Activated CD4-positive, alpha-beta T cell treated with anti-CD3 and anti-CD28 coated beads, Interleukin-2, amount 10 ng/mL, durations not matched to agents 24 days and 14 days (primary cell): ENCODE measurements at regions of chr17 and their contacts with region 1.

Region 1: GRCh38 chr17:9291912-9292560 is 270.7 kb downstream of the NTN1 start:
- DNase-seq: peak; percentile 74
- H3K4me3 Mint-ChIP-seq: no peak overlapping the region
- H3K27ac Mint-ChIP-seq: no peak overlapping the region
- H3K4me1 Mint-ChIP-seq: peaks cover 22% of the 10 kb centered on the region
- H3K27me3 Mint-ChIP-seq: no peaks in the 10 kb centered on the region

Region 2: GRCh38 chr17:9021158-9021991 is 270.7 kb before region 1 on chr17 and contains the start of gene NTN1:
- intact Hi-C with region 1: loop called (anchors 5 kb)
- DNase-seq: peak; percentile 91
- H3K4me3 Mint-ChIP-seq: peak within 1 kb of the TSS; percentile 77
- H3K27ac Mint-ChIP-seq: peak within 1 kb of the TSS; percentile 31
- H3K4me1 Mint-ChIP-seq: peaks cover 4% of the 10 kb centered on the region
- H3K27me3 Mint-ChIP-seq: peaks cover 51% of the 10 kb centered on the region
- total RNA-seq, gene NTN1: 0.43 and 0.51 TPM in 2 replicates

Region 3: DNA sequence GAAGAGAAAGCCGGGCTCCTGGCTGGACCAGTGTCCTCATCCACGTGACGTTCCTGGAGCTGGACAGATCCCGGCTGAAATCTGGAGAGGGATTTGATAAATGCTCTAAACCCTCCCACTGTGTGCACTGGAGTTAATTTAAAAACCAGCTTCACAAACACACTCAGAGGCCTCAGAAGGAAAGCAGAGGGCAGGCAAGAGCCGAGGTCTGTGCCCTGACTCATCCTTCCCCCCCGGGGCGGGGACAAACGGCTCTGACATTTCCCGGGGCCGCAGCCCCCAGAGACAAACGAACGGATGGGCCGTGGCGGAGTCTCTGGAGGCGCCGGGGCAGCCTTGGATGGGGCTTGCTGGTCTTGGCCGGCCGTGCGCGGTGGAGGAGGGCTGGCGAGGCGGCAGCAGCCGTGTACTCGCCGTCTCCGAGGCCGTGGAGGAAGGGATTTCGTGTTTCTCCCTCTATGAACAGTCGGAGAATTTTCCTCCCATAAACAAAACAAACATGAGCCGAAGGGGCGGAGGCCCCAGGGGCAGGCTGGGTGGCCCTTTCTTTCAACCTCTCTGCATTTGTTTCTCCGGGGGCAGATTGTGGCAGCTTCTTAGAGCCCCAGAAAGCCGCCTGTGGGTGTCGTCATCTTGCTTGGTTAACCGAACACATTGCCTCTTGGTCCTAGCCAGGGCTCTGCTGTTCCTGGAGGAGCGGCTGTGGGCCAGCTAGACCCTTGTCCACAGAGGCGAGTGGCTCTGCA is 176.4 kb before region 1 on chr17:
- intact Hi-C with region 1: loop called (anchors 1 kb)
- DNase-seq: peak; percentile 78
- H3K4me3 Mint-ChIP-seq: peak overlapping the region; percentile 75
- H3K27ac Mint-ChIP-seq: peak overlapping the region; percentile 29
- H3K4me1 Mint-ChIP-seq: peaks cover 6% of the 10 kb centered on the region
- H3K27me3 Mint-ChIP-seq: peaks cover 3% of the 10 kb centered on the region

Region 4: DNA sequence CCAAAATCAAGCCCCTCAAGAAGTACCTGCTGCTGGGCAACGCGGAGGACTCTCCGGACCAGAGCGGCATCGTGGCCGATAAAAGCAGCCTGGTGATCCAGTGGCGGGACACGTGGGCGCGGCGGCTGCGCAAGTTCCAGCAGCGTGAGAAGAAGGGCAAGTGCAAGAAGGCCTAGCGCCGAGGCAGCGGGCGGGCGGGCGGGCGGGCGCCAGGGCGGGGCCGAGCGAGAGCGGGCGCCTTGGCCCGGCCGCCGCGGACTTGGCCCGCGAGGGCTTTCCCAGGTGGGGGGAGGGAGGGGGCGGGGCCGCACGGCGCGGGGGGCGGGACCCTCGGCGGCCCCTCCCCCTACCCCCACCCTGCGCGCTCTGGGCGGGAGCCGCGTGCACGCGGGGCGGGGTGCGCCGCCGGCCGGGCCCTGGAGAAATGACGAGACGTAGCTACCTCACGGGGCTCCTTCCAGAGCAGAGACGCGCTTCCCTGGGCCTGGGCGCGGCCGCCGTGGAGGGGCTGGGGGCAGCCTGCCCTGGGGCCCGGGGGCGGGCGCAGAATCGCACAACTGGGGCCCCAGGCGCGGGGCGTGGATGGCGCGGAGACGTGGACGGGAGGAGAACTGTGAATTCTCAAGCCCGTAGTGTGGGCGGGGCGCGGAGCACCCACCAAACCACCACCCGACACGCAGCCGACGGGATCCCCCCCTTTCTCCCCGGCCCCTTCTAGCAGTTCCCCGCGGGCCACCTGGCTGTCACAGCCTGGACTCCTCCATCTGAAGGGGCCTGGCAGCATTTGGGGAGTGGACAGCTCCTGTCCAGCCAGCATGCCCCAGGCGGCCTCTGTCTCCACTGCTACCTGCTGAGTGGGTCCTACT is 52.0 kb before region 1 on chr17:
- intact Hi-C with region 1: loop called (anchors 10 kb)
- DNase-seq: peak; percentile 90
- H3K4me3 Mint-ChIP-seq: peak overlapping the region; percentile 84
- H3K27ac Mint-ChIP-seq: peak overlapping the region; percentile 70
- H3K4me1 Mint-ChIP-seq: peaks cover 8% of the 10 kb centered on the region
- H3K27me3 Mint-ChIP-seq: no peaks in the 10 kb centered on the region

Region 5: DNA sequence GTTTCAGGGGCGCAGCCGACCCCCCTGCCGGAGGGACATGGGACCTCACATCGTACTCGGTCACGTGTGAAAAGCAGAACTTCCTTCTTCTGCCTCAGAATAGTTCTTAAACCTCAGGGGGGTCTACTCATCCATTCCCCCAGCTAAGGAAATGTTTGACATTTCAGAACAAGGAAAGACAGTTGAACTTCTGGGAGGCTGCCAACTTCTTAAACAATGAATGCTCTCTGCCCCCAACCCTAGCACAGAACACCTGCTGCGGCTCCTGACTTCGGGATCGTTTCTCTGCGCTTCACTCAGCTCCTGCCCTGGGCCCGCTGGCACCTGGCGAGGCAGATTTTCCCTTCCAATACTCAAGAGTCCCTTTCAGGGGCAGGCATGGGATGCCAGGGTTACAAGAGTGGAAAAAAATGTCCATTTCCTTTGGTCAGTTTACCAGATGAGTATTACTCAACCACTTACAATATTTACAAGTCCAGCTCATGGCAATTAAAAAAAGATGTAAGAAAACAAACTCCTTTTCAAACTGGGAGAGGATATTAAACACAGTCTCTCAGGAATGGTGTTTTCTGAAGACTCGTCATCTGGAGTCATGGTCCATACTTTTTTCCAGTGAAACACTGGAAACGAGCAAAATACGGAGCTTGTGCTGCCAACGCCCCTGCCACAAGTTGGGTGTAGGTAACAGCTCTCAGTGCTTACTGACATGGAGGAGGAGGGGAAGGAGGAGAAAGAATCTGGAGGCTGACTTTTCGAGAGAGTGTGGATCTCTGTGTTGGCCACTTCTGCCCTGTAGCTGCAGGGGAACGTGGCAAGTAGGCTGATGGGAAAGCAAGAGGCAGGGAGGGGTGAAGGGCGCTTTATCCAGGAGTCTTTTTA is 35.0 kb before region 1 on chr17:
- intact Hi-C with region 1: loop called (anchors 2 kb)
- DNase-seq: no peak
- H3K4me3 Mint-ChIP-seq: no peak overlapping the region
- H3K27ac Mint-ChIP-seq: no peak overlapping the region
- H3K4me1 Mint-ChIP-seq: peaks cover 17% of the 10 kb centered on the region
- H3K27me3 Mint-ChIP-seq: no peaks in the 10 kb centered on the region

Region 6: DNA sequence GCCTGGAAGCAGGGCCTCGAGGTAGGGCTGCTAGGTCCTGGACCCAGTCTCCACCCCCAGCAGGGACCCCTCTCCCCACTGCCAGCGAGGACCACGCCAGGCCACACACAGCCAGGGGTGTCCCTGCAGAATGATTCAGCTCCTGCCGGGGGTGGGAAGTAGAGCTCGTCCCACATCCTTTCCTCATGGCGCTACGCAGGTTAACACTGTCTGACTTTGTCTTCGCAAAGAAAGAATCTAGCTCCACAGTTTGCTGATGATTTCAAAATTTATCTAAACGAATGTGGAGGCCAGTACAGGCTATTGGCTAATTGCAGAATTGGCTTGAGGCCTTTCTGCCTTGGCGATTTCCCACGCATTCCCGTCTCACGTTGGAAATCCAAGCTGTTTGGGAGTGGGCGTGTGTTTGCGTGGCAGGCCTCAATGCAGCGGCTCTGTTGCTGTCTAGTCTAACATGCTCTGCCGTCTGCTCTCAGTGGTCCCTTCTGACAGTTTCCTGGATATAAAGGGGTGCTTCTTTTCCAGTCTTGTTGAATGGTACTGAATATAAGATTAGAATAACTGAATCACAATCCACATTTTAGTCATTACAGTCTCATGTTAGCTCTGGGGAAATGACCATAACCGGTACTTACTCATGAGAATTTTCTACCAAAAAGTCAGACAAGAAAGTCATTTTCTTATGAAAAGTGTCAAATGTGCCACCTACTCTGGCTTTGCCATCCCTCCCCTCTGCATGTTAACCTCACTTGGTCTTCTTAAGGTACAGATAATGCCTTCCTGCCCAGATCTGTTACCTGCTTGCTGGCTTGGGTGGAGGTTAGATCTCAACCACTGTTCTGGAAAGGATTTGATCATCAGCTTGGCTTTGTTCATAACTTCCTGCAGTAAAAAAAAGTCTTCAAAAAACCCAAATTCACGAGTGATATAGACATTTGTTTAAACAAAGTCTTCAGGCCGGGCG is 18.3 kb before region 1 on chr17:
- intact Hi-C with region 1: loop called (anchors 1 kb)
- DNase-seq: no peak
- H3K4me3 Mint-ChIP-seq: peak overlapping the region; percentile 27
- H3K27ac Mint-ChIP-seq: peak overlapping the region; percentile 88
- H3K4me1 Mint-ChIP-seq: peaks cover 16% of the 10 kb centered on the region
- H3K27me3 Mint-ChIP-seq: no peaks in the 10 kb centered on the region

Region 7: GRCh38 chr17:9334536-9335446 is 42.8 kb after region 1 on chr17:
- intact Hi-C with region 1: no loop called
- DNase-seq: no peak
- H3K4me3 Mint-ChIP-seq: no peak overlapping the region
- H3K27ac Mint-ChIP-seq: no peak overlapping the region
- H3K4me1 Mint-ChIP-seq: no peaks in the 10 kb centered on the region
- H3K27me3 Mint-ChIP-seq: no peaks in the 10 kb centered on the region

Region 8: GRCh38 chr17:9470171-9470570 is 178.1 kb after region 1 on chr17:
- intact Hi-C with region 1: no loop called
- DNase-seq: peak; percentile 78
- H3K4me3 Mint-ChIP-seq: peak overlapping the region; percentile 50
- H3K27ac Mint-ChIP-seq: peak overlapping the region; percentile 84
- H3K4me1 Mint-ChIP-seq: peaks cover 25% of the 10 kb centered on the region
- H3K27me3 Mint-ChIP-seq: no peaks in the 10 kb centered on the region

Region 9: DNA sequence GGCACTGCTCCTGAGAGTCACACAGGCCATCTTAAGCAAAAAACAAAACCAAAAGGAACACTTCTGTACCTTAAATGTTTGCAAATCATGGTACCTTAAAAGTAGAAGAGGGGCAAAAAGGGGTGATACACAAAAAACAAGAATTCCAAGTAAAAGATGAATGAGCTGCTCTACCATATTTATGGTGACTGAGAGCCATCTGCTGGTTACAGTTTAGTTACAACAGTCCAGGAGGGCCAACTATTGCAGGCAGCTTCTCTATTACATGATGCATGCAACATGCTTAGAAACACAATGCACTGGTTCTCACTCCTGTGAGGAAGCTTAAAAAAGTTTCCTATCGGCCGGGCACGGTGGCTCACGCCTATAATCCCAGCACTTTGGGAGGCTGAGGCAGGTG is 230.0 kb after region 1 on chr17:
- intact Hi-C with region 1: loop called (anchors 10 kb)
- DNase-seq: peak; percentile 68
- H3K4me3 Mint-ChIP-seq: no peak overlapping the region
- H3K27ac Mint-ChIP-seq: no peak overlapping the region
- H3K4me1 Mint-ChIP-seq: peaks cover 11% of the 10 kb centered on the region
- H3K27me3 Mint-ChIP-seq: no peaks in the 10 kb centered on the region